CD4-positive, alpha-beta memory T cell (primary cell): ENCODE measurements at regions of chr2 and their contacts with region 1.

Region 1: DNA sequence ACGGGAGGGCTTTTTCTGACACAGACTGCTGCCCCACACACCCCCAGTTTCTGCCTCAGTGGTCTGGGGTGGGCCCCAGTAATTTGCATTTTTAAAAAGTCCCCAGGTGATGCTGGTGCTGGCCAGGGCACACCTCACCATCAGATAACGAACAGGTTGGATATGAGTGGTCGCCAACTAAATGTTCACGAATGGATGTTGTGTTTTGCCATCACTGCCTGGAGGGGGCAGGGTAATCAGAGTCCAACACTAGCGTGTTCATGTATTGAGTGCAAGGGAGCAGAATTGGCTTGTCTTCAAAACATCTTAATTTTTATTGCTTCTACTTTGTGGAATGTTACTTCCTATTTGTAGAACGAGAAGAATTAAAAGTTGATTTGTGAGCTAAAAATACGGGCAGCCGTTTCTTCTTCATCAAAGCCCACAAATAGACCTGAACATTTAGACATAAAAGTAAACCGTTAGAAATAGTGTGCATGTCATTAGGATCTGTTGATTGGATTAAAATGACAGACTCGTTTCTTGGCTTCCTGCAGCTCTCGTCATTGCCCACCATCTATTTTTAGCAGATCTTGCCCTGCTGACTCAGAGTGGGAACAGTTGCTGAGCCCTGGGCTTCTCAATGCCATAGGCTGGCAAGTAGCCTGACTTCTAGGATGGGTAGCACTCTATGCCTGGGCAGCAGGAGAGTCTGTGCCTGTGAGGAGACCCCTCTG is 45.2 kb downstream of the NCK2 start:
- DNase-seq: peak; percentile 56 to 92 (median 61)
- H3K4me3 ChIP-seq: peak overlapping the region in 1 of 2 donors; percentile 25
- H3K4me3 Mint-ChIP-seq: peak overlapping the region; percentile 78 to 92 (median 84)
- H3K27ac ChIP-seq: peak overlapping the region; percentile 79
- H3K27ac Mint-ChIP-seq: peak overlapping the region; percentile 92 to 98 (median 96)
- H3K4me1 ChIP-seq: peaks cover 98% of the 10 kb centered on the region
- H3K4me1 Mint-ChIP-seq: peaks cover 80 to 98% (median 87%) of the 10 kb centered on the region in 4 donors
- H3K27me3 ChIP-seq: no peaks in the 10 kb centered on the region
- H3K27me3 Mint-ChIP-seq: no peaks in the 10 kb centered on the region

Region 2: DNA sequence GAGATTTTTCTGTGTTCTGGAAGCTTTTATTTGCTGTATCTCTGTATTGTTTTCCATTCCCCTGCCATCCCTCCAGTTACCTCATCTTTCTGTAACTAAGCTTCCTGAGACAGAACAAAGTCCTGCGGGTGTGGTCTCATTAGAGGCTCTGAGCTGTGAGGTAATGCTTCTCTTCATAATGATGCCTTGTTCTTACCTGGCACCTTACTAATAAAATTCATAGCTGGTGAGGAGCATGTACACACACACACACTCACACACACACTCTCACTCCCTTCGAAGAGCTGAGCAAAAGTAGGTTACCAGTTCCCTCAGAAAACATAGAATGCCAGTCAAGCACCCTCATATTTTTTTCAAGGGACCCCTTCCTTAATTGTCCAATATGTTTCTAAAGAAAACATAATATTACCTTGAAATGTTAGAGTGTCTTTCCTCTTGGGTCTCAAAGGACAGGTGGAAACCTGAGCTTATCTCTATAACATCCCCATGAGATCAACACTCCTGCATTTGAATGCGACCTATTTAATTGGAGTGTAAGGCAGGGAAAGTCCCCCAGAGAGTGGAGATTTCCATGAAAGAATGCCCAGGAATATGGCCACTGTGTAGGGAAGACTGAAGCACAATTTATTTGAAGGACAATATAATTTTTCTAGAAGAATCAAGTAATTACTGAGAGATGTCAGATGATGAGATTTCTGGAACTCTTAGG is 206.8 kb before region 1 on chr2:
- CTCF ChIA-PET with region 1: interaction called, 280 read pairs
- POLR2A ChIA-PET with region 1: interaction called, 17 read pairs
- intact Hi-C with region 1: no loop called
- DNase-seq: no peak
- H3K4me3 ChIP-seq: no peak overlapping the region
- H3K4me3 Mint-ChIP-seq: peak overlapping the region in 1 of 8 donors; percentile 2
- H3K27ac ChIP-seq: no peak overlapping the region
- H3K27ac Mint-ChIP-seq: no peak overlapping the region
- H3K4me1 ChIP-seq: peaks cover 16% of the 10 kb centered on the region
- H3K4me1 Mint-ChIP-seq: peaks cover 14 to 26% (median 19%) of the 10 kb centered on the region in 4 donors
- H3K27me3 ChIP-seq: no peaks in the 10 kb centered on the region
- H3K27me3 Mint-ChIP-seq: peaks cover 0 to 1% of the 10 kb centered on the region in 2 donors

Region 3: GRCh38 chr2:105761931-105762515 is 27.9 kb before region 1 on chr2:
- CTCF ChIA-PET with region 1: interaction called, 45 read pairs
- POLR2A ChIA-PET with region 1: interaction called, 4 read pairs
- intact Hi-C with region 1: no loop called
- DNase-seq: no peak
- H3K4me3 ChIP-seq: peak overlapping the region; percentile 9 to 39
- H3K4me3 Mint-ChIP-seq: peak overlapping the region; percentile 26 to 87 (median 71)
- H3K27ac ChIP-seq: peak overlapping the region; percentile 53
- H3K27ac Mint-ChIP-seq: peak overlapping the region; percentile 61 to 93 (median 84)
- H3K4me1 ChIP-seq: peaks cover 100% of the 10 kb centered on the region
- H3K4me1 Mint-ChIP-seq: peaks cover 79 to 100% (median 91%) of the 10 kb centered on the region in 4 donors
- H3K27me3 ChIP-seq: no peaks in the 10 kb centered on the region
- H3K27me3 Mint-ChIP-seq: no peaks in the 10 kb centered on the region

Region 4: GRCh38 chr2:105802587-105802986 is 12.7 kb after region 1 on chr2:
- CTCF ChIA-PET with region 1: interaction called, 36 read pairs
- POLR2A ChIA-PET with region 1: interaction called, 14 read pairs
- intact Hi-C with region 1: loop called (anchors 1 kb)
- DNase-seq: peak; percentile 67 to 95 (median 76)
- H3K4me3 ChIP-seq: peak overlapping the region in 1 of 2 donors; percentile 3
- H3K4me3 Mint-ChIP-seq: peak overlapping the region; percentile 51 to 78 (median 76)
- H3K27ac ChIP-seq: peak overlapping the region; percentile 74
- H3K27ac Mint-ChIP-seq: peak overlapping the region; percentile 86 to 98 (median 95)
- H3K4me1 ChIP-seq: peaks cover 97% of the 10 kb centered on the region
- H3K4me1 Mint-ChIP-seq: peaks cover 83 to 98% (median 92%) of the 10 kb centered on the region in 4 donors
- H3K27me3 ChIP-seq: no peaks in the 10 kb centered on the region
- H3K27me3 Mint-ChIP-seq: no peaks in the 10 kb centered on the region